ENCODE measurements at regions of chr19 and their contacts with region 1.

Region 1: DNA sequence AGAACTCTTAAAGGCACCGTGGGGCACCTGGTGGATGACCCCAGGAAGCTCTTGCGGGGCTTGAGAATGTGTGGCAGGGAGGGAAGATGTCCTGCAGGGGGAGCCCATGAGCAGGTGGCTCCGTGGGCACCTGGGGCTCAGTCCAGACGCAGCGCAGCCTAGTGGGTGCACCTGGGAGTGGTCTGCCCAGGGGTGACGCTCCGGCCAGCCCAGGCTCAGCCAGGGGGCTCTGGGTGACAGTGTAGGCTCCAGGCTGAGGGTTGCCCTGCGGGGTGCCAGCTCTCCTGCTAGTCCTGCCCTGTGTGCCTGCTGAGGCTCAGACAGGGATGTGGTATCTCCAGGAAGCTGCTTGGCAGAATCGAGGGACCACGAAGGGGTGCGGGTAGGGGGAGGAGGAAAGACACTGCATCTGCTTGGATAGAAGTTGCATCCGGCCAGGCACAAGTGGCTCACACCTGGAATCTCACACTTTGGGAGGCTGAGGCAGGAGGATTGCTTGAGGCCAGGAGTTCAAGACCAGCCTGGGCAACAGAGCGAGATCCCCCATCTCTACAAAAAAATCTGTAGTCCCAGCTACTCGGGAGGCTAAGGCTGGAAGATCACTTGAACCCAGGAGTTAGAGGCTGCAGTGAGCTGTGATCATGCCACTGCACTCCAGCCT is 15.0 kb upstream of the PGLS start:
- DNase-seq: peak; percentile 63
- ATAC-seq: peak; percentile 100
- H3K4me3 ChIP-seq: no peak overlapping the region
- H3K27ac ChIP-seq: no peak overlapping the region
- H3K4me1 ChIP-seq: peaks cover 13% of the 10 kb centered on the region
- H3K27me3 ChIP-seq: no peaks in the 10 kb centered on the region
- CTCF ChIP-seq: peak; percentile 98 to 100 (median 99)
- EP300 ChIP-seq: no peak
- POLR2A ChIP-seq: no peak
- RAD21 ChIP-seq: peak; percentile 60

Region 2: GRCh38 chr19:17506745-17507144 is 10.3 kb after region 1 on chr19:
- CTCF ChIA-PET with region 1: interaction called, 27 read pairs
- POLR2A ChIA-PET with region 1: interaction called, 6 read pairs
- RAD21 ChIA-PET with region 1: interaction called, 3 read pairs
- SMC1A ChIA-PET with region 1: interaction called, 9 read pairs
- in situ Hi-C with region 1: no loop called
- intact Hi-C with region 1: no loop called
- DNase-seq: no peak
- ATAC-seq: no peak
- H3K4me3 ChIP-seq: no peak overlapping the region
- H3K27ac ChIP-seq: no peak overlapping the region
- H3K4me1 ChIP-seq: peaks cover 4% of the 10 kb centered on the region
- H3K27me3 ChIP-seq: no peaks in the 10 kb centered on the region
- CTCF ChIP-seq: no peak
- EP300 ChIP-seq: no peak
- POLR2A ChIP-seq: peak; percentile 27; the same call in 1 of the 2 replicates
- RAD21 ChIP-seq: no peak

Region 3: DNA sequence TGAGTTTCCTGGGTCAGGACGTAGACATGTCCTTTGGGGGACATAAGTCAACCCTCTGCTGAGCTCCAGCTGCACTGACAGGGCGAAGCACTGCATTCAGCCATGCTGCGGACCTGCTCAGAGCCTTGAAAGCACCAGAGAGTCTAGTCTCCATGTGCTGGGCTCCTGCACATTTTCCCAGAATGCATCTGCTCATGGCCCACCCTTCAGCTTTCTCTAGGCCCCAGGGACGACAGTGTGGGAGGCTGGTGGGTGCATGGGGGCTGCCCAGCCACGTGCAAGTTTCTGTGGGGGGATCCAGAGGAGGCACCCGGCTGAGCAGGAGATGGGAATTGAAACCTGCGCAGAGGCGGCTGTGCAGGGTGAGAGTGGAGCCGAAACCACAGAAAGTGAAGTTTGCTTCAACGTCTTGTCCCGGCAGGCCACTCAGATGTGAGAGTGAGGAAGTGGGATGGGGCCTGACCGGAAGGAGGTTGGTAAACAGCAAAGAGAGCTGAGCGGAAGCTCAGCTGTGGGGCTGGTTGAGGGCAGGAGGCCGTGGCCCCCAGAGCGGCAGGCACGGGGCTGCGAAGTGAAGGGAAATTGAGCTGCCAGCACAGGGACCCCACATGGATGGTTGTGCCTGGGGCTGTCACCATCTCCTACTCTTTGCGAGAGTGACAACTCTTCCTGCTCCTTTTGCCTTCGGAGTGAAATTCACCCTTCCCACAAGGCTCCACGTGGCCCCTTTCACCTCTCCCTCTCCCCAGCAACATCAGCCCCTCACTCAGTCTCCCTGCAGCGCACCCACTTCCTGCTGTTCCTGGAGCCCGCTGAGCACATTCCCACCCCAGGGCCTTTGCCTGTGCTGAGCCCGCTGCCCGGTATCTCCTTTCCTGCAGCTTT is 26.8 kb after region 1 on chr19:
- CTCF ChIA-PET with region 1: interaction called, 10 read pairs
- POLR2A ChIA-PET with region 1: interaction called, 3 read pairs
- RAD21 ChIA-PET with region 1: interaction called, 5 read pairs
- SMC1A ChIA-PET with region 1: interaction called, 5 read pairs
- in situ Hi-C with region 1: no loop called
- intact Hi-C with region 1: no loop called
- DNase-seq: peak; percentile 92
- ATAC-seq: peak; percentile 92
- H3K4me3 ChIP-seq: peak overlapping the region; percentile 23; the same call in 1 of the 2 replicates
- H3K27ac ChIP-seq: peak overlapping the region; percentile 95
- H3K4me1 ChIP-seq: peaks cover 46% of the 10 kb centered on the region
- H3K27me3 ChIP-seq: no peaks in the 10 kb centered on the region
- CTCF ChIP-seq: no peak
- EP300 ChIP-seq: peak; percentile 58 to 82
- POLR2A ChIP-seq: peak; percentile 82
- RAD21 ChIP-seq: peak; percentile 18; the same call in 1 of the 2 replicates

Region 4: DNA sequence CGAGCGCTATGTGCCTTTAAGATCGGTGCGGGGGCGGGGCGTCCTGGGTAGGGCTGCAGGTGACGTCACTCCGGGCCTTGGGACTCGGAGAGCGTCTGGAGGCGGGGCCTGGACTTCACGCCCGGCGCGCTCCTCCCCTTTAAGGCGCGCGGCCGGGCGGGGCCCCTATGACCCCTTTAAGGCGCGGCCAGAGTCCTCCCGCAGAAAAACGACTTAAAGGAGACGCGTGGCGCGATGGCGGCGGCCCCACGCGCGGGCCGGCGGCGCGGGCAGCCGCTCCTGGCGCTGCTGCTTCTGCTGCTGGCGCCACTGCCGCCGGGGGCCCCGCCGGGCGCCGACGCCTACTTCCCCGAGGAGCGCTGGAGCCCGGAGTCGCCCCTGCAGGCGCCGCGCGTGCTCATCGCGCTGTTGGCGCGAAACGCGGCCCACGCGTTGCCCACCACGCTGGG is 59.0 kb after region 1 on chr19 and contains the start of gene COLGALT1:
- CTCF ChIA-PET with region 1: interaction called, 21 read pairs
- POLR2A ChIA-PET with region 1: no interaction called
- RAD21 ChIA-PET with region 1: interaction called, 6 read pairs
- SMC1A ChIA-PET with region 1: interaction called, 6 read pairs
- in situ Hi-C with region 1: no loop called
- intact Hi-C with region 1: no loop called
- DNase-seq: peak; percentile 77
- ATAC-seq: peak; percentile 94
- H3K4me3 ChIP-seq: peak within 1 kb of the TSS; percentile 88
- H3K27ac ChIP-seq: peak within 1 kb of the TSS; percentile 86
- H3K4me1 ChIP-seq: 0 out of 2 replicates have a peak, but pooled peaks cover 4% of the 10 kb centered on the region
- H3K27me3 ChIP-seq: no peaks in the 10 kb centered on the region
- CTCF ChIP-seq: no peak
- EP300 ChIP-seq: no peak
- POLR2A ChIP-seq: no peak
- RAD21 ChIP-seq: no peak
- polyA plus RNA-seq, gene COLGALT1: 1.2 to 3.5 TPM

Region 5: DNA sequence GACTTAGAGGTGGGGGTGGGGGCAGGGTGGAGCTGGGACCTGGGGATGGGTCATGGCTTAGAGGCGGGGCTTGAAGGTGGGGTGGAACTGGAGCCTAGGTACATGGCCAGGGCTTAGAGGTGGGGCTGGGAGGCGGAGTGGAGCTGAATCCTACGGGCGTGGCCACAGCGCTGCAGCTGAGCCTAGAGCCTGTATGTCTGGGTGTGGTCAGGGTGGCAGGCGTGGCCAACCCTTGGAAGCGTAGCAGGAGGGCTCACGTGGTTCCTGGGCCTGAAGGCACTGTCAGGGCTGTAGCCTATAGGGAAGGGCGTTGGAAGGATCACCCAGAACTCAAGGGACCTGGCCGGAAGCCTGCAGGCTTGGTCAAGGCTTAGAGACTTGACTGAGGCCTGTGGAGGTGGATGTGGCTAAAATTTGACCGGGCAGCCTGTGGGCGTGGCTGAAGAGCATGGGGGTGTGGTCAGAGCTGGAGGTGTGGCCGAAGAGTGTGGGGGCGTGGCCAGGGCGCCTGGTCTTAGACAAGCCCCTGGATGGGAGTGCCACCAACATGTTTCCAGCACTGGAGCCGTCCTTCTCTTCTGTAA is 83.3 kb after region 1 on chr19:
- CTCF ChIA-PET with region 1: interaction called, 114 read pairs
- POLR2A ChIA-PET with region 1: no interaction called
- RAD21 ChIA-PET with region 1: interaction called, 6 read pairs
- SMC1A ChIA-PET with region 1: interaction called, 11 read pairs
- in situ Hi-C with region 1: no loop called
- intact Hi-C with region 1: loop called (anchors 5 kb)
- DNase-seq: no peak
- ATAC-seq: peak; percentile 97
- H3K4me3 ChIP-seq: no peak overlapping the region
- H3K27ac ChIP-seq: no peak overlapping the region
- H3K4me1 ChIP-seq: no peaks in the 10 kb centered on the region
- H3K27me3 ChIP-seq: no peaks in the 10 kb centered on the region
- CTCF ChIP-seq: no peak
- EP300 ChIP-seq: no peak
- POLR2A ChIP-seq: no peak; the same call in 1 of the 2 replicates
- RAD21 ChIP-seq: no peak